ENCODE measurements at regions of chr11 and their contacts with region 1.

Region 1: GRCh38 chr11:110711776-110712658 is at the start of gene ARHGAP20:
- DNase-seq: peak; percentile 86
- ATAC-seq: peak; percentile 93
- total RNA-seq, gene ARHGAP20: 7.7 TPM

Region 2: GRCh38 chr11:110349138-110349996 is 362.6 kb before region 1 on chr11:
- intact Hi-C with region 1: no loop called
- DNase-seq: no peak
- ATAC-seq: peak; percentile 67

Region 3: DNA sequence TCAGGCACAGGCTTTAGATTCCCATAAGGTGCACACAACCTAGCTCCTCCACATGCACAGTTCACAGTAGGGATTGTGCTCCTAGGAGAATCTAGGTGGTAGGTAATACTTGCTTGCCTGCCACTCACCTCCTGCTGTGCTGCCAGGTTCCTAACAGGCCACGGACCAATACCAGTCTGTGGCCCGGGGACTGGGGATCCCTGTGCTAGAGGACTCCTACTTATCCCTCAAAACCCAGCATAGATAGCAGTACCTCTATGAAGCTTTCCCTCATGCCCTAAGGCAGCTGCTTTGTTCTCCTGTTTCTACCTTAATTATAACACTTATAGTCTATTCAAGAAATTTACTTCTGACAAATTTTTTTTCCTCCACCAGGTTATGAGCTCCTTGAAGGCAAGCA is 36.5 kb before region 1 on chr11:
- intact Hi-C with region 1: no loop called
- DNase-seq: no peak
- ATAC-seq: no peak

Region 4: DNA sequence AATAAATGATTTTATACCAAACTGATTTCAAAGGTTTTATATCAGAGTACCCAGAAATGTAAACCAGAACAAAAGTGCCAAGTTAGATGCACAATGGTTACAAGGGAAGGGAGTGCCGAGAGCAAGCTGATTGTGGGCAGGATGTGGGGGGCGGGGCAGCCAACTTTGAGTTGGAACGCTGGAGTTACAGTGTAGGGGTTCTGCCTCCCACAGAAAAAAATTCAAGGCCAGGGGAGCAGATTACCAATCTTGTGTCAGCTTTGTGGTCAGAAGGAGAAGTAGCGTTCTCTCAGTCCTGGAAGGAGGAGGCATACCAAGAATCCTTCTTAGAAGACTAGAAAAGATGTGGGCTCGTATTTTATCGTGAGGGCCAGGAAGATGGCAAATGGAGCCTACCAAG is 517.6 kb after region 1 on chr11:
- intact Hi-C with region 1: loop called (anchors 10 kb)
- DNase-seq: no peak
- ATAC-seq: no peak